Caco-2 (cell line): ENCODE measurements at regions of chr12 and their contacts with region 1.

Region 1: DNA sequence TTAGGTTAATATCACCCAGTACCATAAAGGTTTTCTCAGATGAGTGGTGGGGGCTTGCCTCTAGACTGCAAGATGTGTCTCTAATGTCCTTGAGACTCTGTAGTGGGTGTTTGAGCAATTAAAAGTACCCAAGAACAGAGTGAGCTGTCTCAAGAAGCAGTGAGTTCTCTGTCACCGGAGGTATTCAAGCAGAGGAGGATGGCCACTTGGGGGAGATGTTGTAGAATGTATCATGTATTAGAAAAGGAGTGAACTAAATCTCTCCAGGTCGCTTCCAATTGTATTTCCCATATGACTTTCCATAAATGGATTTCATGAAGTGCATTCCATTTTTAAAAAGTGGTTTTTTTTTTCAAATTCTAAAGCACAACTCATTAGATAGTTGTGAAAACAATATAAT is 35.0 kb downstream of the SLC17A8 start:
- DNase-seq: peak in 1 of 2 experiments; percentile 30
- H3K4me3 ChIP-seq: no peak overlapping the region
- H3K4me3 Mint-ChIP-seq: no peak overlapping the region
- H3K27ac Mint-ChIP-seq: no peak overlapping the region
- H3K4me1 ChIP-seq: no peaks in the 10 kb centered on the region
- H3K4me1 Mint-ChIP-seq: no peaks in the 10 kb centered on the region
- H3K27me3 ChIP-seq: no peaks in the 10 kb centered on the region
- H3K27me3 Mint-ChIP-seq: peaks cover 5% of the 10 kb centered on the region
- CTCF ChIP-seq: peak; percentile 31 to 47

Region 2: GRCh38 chr12:100234598-100235304 is 157.1 kb before region 1 on chr12:
- CTCF ChIA-PET with region 1: no interaction called
- POLR2A ChIA-PET with region 1: no interaction called
- intact Hi-C with region 1: loop called (anchors 10 kb)
- DNase-seq: peak in 1 of 2 experiments; percentile 31
- H3K4me3 ChIP-seq: no peak overlapping the region
- H3K4me3 Mint-ChIP-seq: peak overlapping the region; percentile 23
- H3K27ac Mint-ChIP-seq: no peak overlapping the region
- H3K4me1 ChIP-seq: peaks cover 9% of the 10 kb centered on the region
- H3K4me1 Mint-ChIP-seq: peaks cover 13% of the 10 kb centered on the region
- H3K27me3 ChIP-seq: no peaks in the 10 kb centered on the region
- H3K27me3 Mint-ChIP-seq: no peaks in the 10 kb centered on the region
- CTCF ChIP-seq: peak; percentile 53 to 64

Region 3: DNA sequence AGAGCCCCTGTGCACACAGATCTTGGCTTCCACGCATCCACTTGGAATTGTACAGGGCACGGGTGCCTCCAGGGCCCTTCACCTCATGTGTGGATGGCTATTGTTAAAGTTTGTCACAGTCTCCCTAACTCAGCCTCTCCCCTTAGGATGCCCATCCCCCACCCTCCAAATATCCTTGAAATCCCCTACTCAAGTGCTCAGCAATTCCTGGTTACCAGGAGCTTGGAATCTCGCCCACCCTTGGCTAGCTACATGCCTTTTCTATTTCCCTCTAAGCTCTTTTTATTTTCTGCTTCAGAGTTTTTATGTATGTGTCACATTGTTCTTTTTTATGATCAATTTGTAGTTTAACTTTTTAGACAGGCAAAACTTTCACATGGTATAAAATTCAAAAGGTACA is 68.8 kb after region 1 on chr12:
- CTCF ChIA-PET with region 1: no interaction called
- POLR2A ChIA-PET with region 1: no interaction called
- intact Hi-C with region 1: loop called (anchors 5 kb)
- DNase-seq: no peak
- H3K4me3 ChIP-seq: no peak overlapping the region
- H3K4me3 Mint-ChIP-seq: no peak overlapping the region
- H3K27ac Mint-ChIP-seq: no peak overlapping the region
- H3K4me1 ChIP-seq: no peaks in the 10 kb centered on the region
- H3K4me1 Mint-ChIP-seq: no peaks in the 10 kb centered on the region
- H3K27me3 ChIP-seq: no peaks in the 10 kb centered on the region
- H3K27me3 Mint-ChIP-seq: no peaks in the 10 kb centered on the region
- CTCF ChIP-seq: no peak

Region 4: DNA sequence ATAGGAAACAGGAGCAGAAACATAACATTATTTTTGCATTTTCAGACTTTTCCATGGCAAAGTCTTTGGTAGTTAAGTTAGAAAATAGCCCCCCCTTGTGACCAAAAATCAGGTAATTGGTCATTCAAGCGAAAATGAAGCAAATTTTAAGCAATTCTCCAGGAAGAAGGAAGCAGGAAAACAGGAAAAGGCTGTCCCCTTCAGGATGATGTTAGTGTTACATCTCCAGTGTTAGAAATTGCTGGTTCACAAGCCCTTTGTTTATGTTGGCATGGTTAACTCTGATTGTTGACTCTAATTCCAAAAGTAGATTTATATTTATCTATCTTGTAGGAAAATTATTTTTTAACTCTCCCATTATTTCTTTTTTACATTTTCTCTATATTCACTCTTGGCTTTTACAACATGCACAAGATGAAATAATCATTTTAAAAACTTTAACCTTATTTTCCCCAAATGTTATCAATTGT is 162.8 kb after region 1 on chr12:
- CTCF ChIA-PET with region 1: no interaction called
- POLR2A ChIA-PET with region 1: no interaction called
- intact Hi-C with region 1: loop called (anchors 1 kb)
- DNase-seq: peak; percentile 40 to 83
- H3K4me3 ChIP-seq: no peak overlapping the region
- H3K4me3 Mint-ChIP-seq: no peak overlapping the region
- H3K27ac Mint-ChIP-seq: no peak overlapping the region
- H3K4me1 ChIP-seq: no peaks in the 10 kb centered on the region
- H3K4me1 Mint-ChIP-seq: no peaks in the 10 kb centered on the region
- H3K27me3 ChIP-seq: no peaks in the 10 kb centered on the region
- H3K27me3 Mint-ChIP-seq: peaks cover 2% of the 10 kb centered on the region
- CTCF ChIP-seq: peak; percentile 86 to 96